Activated CD4-positive, alpha-beta memory T cell treated with anti-CD3 and anti-CD28 coated beads for 36 hours (primary cell): ENCODE measurements at regions of chr10 and their contacts with region 1.

Region 1: DNA sequence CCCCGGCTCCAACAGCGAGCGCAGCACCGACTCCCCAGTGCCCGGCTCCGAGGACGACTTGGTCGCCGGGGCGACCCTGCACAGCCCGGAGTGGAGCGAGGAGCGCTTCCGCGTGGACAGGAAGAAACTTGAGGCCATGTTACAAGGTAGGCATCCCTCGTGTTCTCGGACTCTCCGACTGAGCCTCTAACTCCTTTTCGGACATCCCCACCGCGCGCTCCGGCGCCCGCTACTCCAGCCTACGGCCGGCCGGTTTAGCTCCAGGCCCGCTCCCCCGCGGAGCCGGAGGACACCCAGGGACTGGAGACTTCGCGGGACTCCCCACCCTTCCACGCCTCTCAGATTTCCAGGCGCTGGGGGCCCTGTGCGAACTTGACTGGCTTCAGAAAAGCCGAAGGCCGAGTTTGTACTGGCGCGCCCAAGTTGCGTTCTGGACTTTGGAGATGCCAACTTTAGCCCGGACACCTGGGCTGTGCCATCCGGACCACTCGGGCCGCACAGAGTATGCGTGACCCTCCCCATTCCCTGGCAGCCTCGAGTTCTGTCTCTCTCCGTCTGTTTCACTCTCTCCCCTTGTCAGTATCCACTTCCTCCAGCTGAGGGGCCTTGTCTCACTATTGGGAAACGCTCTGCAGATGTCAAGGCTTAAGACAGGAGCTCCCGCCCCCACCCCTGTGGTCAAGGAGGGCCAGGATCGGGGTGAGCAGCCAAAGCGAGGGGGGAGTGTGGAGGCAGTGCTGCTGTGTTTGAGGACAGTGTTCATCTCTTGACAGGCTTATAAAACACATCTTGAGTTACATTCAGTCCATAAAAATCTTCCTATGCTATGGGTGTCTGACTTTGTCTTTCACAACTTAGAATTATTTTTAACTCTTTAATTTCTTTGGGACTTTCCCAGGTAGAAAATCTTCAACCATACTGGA is 777 bp downstream of the BICC1 start:
- DNase-seq: peak; percentile 9
- H3K4me3 Mint-ChIP-seq: peak overlapping the region; percentile 64
- H3K27ac Mint-ChIP-seq: no peak overlapping the region
- H3K4me1 Mint-ChIP-seq: peaks cover 15% of the 10 kb centered on the region
- H3K27me3 Mint-ChIP-seq: peaks cover 38% of the 10 kb centered on the region

Region 2: DNA sequence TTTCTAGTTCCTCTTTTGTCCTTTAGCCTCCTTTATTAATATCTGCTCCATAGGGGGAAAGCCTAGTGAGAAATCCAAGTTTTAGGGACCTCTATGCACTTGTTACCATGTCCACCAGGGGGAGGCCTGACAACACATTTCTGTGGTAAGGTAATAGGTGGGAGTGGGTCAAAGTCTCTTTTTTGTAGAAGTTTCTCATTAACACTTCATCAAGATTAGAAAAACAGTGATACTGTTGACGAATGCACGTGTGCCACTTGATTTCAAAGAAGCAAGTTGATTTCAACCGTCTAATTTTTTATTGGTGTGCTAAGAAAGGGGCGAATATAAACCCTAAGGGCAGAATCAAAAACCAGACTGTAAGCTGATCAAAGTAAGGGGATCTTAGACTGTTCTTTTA is 213.9 kb before region 1 on chr10:
- CTCF ChIA-PET with region 1: no interaction called
- POLR2A ChIA-PET with region 1: no interaction called
- intact Hi-C with region 1: loop called (anchors 5 kb)
- DNase-seq: peak; percentile 70
- H3K4me3 Mint-ChIP-seq: no peak overlapping the region
- H3K27ac Mint-ChIP-seq: no peak overlapping the region
- H3K4me1 Mint-ChIP-seq: peaks cover 2% of the 10 kb centered on the region
- H3K27me3 Mint-ChIP-seq: peaks cover 2% of the 10 kb centered on the region

Region 3: DNA sequence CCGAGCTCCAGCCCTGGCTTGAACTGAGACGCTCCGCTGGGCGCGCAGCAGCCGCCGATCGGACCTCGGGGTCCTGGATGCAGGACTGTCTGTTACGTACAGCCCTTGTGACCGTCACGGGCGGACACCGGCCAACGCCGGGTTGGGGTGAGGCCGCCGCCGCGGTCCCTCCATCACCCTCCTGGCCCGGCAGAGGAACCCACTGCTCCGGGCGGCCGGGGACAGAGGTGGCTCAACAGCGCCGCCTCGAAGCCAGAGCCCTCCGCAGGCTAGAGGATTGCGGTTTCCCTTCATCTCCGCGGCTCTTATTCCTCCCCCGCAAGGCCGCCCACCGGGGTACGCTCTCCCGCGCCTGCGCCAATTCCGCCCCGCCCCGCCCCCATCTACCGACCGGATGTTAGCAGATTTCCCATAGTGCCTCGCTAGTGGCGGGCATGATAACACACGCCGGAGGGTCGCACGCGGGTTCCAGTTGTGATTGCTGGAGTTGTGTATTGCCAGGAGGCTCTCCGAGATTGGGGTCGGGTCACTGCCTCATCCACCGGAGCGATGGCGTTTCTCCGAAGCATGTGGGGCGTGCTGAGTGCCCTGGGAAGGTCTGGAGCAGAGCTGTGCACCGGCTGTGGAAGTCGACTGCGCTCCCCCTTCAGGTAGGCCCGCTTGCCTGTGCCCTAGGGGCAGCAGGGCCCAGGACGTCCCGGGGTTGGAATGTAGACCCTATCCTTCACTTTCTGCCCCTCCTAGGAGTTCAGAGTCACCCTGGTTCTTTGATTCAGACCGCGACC is 128.3 kb before region 1 on chr10 and contains the start of gene TFAM:
- CTCF ChIA-PET with region 1: no interaction called
- POLR2A ChIA-PET with region 1: no interaction called
- intact Hi-C with region 1: loop called (anchors 10 kb)
- DNase-seq: peak; percentile 99
- H3K4me3 Mint-ChIP-seq: peak within 1 kb of the TSS; percentile 99
- H3K27ac Mint-ChIP-seq: peak within 1 kb of the TSS; percentile 92
- H3K4me1 Mint-ChIP-seq: peaks cover 37% of the 10 kb centered on the region
- H3K27me3 Mint-ChIP-seq: no peaks in the 10 kb centered on the region
- total RNA-seq, gene TFAM: 85.4 to 92.5 TPM

Region 4: DNA sequence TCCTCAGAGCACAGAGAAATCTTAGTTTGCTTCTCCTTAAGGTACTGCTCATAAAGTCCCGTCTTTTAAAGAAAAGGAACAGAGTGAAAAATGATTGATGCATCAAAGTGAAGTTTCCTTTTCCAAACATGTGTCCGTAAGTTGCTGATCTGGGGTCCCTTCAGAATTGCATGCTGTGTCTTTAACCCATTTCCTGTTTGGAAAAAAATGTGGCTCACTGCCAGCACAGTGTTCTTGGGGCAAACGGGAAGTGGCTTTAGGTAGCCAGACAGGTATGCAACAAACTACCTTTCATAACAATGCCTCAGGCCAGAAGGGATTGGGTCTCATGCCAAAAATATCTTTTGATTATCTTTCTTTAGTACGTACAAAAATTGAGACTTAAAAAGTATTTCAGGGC is 77.4 kb before region 1 on chr10:
- CTCF ChIA-PET with region 1: no interaction called
- POLR2A ChIA-PET with region 1: no interaction called
- intact Hi-C with region 1: no loop called
- DNase-seq: no peak
- H3K4me3 Mint-ChIP-seq: no peak overlapping the region
- H3K27ac Mint-ChIP-seq: no peak overlapping the region
- H3K4me1 Mint-ChIP-seq: peaks cover 14% of the 10 kb centered on the region
- H3K27me3 Mint-ChIP-seq: peaks cover 5% of the 10 kb centered on the region

Region 5: DNA sequence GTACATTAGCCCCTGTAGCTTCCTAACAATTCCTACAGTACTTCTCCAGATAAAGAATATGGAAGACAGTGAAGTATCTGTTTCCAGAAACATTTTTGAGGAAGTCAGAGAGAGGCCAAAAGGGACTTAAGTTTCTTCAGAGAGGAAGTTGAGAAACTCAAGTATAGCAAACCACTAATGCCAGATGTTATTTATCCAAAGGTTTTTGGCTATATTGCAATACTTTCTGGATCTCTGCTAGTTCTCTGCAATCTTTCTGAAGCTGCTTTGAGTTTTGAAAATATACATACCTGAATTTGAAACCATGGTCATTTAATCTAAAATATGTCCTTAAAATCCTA is 64.0 kb after region 1 on chr10:
- CTCF ChIA-PET with region 1: no interaction called
- POLR2A ChIA-PET with region 1: no interaction called
- intact Hi-C with region 1: loop called (anchors 10 kb)
- DNase-seq: no peak
- H3K4me3 Mint-ChIP-seq: no peak overlapping the region
- H3K27ac Mint-ChIP-seq: no peak overlapping the region
- H3K4me1 Mint-ChIP-seq: no peaks in the 10 kb centered on the region
- H3K27me3 Mint-ChIP-seq: no peaks in the 10 kb centered on the region

Region 6: GRCh38 chr10:58743466-58744115 is 230.1 kb after region 1 on chr10:
- CTCF ChIA-PET with region 1: no interaction called
- POLR2A ChIA-PET with region 1: no interaction called
- intact Hi-C with region 1: no loop called
- DNase-seq: no peak
- H3K4me3 Mint-ChIP-seq: no peak overlapping the region
- H3K27ac Mint-ChIP-seq: no peak overlapping the region
- H3K4me1 Mint-ChIP-seq: no peaks in the 10 kb centered on the region
- H3K27me3 Mint-ChIP-seq: no peaks in the 10 kb centered on the region

Region 7: GRCh38 chr10:59709395-59710125 is 1196.1 kb after region 1 on chr10 and contains the start of gene SLC16A9:
- CTCF ChIA-PET with region 1: no interaction called
- POLR2A ChIA-PET with region 1: no interaction called
- intact Hi-C with region 1: loop called (anchors 10 kb)
- DNase-seq: peak; percentile 76
- H3K4me3 Mint-ChIP-seq: peak within 1 kb of the TSS; percentile 55
- H3K27ac Mint-ChIP-seq: no peak within 1 kb of the TSS
- H3K4me1 Mint-ChIP-seq: no peaks in the 10 kb centered on the region
- H3K27me3 Mint-ChIP-seq: peaks cover 45% of the 10 kb centered on the region
- total RNA-seq, gene SLC16A9: 0.40 to 0.44 TPM